Stomach (tissue), 19 donors: ENCODE measurements at regions of chr3 and their contacts with region 1.

Region 1: DNA sequence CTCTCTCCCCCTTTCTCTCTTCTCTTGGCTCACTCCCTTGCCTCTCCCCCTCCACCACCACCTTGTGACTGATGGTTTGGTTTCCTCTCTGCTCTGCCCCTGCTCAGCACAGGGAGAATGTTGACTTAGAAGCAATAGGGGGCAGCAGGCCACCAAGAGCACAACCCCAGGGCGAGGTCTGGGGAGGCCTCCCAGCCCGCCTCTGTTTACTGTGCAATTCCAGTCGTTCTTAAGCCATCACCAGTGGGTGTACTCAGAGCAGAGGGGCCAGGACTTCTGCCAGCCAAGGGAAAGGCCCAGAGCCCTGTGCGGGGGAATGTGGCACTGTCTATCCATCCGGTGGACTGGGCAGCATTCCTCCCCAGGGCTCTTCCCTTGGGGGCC is 5.7 kb upstream of the APEH start:
- DNase-seq: no peak
- H3K4me3 ChIP-seq: no peak overlapping the region
- H3K27ac ChIP-seq: no peak overlapping the region
- H3K4me1 ChIP-seq: peaks cover 4 to 45% (median 19%) of the 10 kb centered on the region in 4 donors
- H3K27me3 ChIP-seq: peaks cover 0 to 10% (median 0%) of the 10 kb centered on the region in 3 donors
- CTCF ChIP-seq: no peak
- EP300 ChIP-seq: no peak
- POLR2A ChIP-seq: no peak

Region 2: GRCh38 chr3:48439820-48440589 is 1228.4 kb before region 1 on chr3 and contains the starts of genes CCDC51 and TMA7:
- intact Hi-C with region 1: no loop called
- DNase-seq: peak; percentile 99
- H3K4me3 ChIP-seq: peak within 1 kb of the TSS; percentile 70 to 88 (median 80)
- H3K27ac ChIP-seq: peak within 1 kb of the TSS; percentile 90 to 95 (median 94)
- H3K4me1 ChIP-seq: peaks cover 17 to 43% (median 30%) of the 10 kb centered on the region in 4 donors
- H3K27me3 ChIP-seq: no peaks in the 10 kb centered on the region
- CTCF ChIP-seq: no peak
- EP300 ChIP-seq: no peak
- POLR2A ChIP-seq: peak in 2 of 4 donors; percentile 86 to 91
- total RNA-seq, gene CCDC51: 1.8 to 12.5 (median 7.1) TPM
- total RNA-seq, gene TMA7: 107 to 298 (median 230) TPM

Region 3: DNA sequence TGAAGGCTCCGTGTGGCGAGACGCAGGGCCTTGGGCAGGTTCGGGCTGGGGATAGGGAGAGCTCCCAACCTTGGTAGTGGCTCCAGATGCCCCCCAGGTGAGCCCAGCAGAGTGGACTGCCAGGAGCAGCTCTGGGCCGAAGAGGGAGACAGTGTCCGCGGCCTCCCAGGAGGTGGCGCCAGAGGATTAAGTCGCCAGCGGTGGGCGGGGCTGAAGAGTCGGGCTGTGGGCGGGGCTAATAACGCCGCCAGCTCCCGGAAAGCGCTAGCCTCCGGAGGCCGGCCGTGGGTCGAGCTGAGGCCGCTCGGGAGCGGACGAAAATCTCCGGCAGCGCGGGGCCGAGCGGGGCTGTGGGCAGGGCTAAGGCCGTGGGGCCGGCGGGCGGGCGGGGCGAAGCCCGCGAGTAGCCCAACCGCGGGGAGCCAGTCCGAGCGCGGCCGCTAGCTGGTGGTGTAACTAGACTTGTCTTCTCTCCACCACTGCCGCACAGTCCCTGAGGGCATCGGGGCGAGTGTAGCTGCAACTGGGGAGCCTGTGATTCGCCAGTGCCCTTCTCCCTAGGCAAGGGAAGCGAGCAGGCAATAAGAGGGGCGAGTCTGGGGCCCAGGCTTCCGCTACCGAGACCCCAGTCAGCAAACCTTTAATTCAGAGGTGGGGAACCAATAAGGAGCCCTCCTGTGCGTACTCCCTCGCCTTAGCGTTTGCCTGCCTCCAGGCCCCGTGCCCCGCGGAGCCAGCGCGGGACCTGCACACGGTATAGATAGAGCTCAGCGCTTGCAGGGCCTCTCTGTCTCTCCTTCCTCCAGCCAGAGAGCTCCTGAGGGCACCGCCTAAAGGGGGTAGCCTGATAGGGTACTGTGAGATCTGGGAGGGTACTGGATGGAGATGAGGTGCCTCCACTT is 128.5 kb before region 1 on chr3:
- intact Hi-C with region 1: loop called (anchors 5 kb)
- DNase-seq: peak; percentile 97 to 98
- H3K4me3 ChIP-seq: peak overlapping the region; percentile 47 to 53 (median 49)
- H3K27ac ChIP-seq: peak overlapping the region; percentile 78 to 88 (median 84)
- H3K4me1 ChIP-seq: peaks cover 9 to 34% (median 16%) of the 10 kb centered on the region in 4 donors
- H3K27me3 ChIP-seq: no peaks in the 10 kb centered on the region
- CTCF ChIP-seq: peak in 5 of 7 experiments; percentile 86 to 95 (median 91)
- EP300 ChIP-seq: no peak
- POLR2A ChIP-seq: no peak